Left colon (tissue), 2 donors: ENCODE measurements at regions of chr11 and their contacts with region 1.

Region 1: GRCh38 chr11:112555491-112556364 is 295.1 kb upstream of the PLET1 start:
- DNase-seq: peak in 1 of 2 donors; percentile 71
- ATAC-seq: peak; percentile 72

Region 2: GRCh38 chr11:112289588-112290492 is 265.9 kb before region 1 on chr11:
- intact Hi-C with region 1: loop called in 1 of 2 experiments (anchors 10 kb)
- DNase-seq: peak; percentile 73 to 91
- ATAC-seq: peak; percentile 98

Region 3: GRCh38 chr11:112627588-112628045 is 71.9 kb after region 1 on chr11:
- intact Hi-C with region 1: no loop called
- DNase-seq: no peak
- ATAC-seq: no peak